ENCODE measurements at regions of chr16 and their contacts with region 1.

Region 1: GRCh38 chr16:23324730-23325129 is 22.6 kb downstream of the SCNN1B start:
- DNase-seq: peak; percentile 77

Region 2: DNA sequence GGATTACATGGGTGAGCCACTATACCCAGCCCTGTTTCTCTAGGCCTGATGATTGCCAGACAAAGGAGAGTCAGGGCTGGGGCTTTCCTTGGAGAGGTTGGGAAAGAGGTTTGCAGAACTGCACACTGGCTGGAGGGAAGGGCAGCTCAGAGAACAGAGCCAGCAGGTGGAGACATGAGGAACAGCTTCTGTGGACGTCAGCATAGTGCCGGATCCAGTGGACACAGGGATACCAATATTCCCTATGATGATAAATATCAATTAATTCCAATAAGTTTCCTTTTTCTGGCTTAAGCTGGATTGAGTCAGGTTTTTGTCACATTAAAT is 65.8 kb before region 1 on chr16:
- intact Hi-C with region 1: no loop called
- DNase-seq: no peak

Region 3: GRCh38 chr16:23269248-23269953 is 55.3 kb before region 1 on chr16:
- intact Hi-C with region 1: loop called in 1 of 2 experiments (anchors 2 kb)
- DNase-seq: no peak